Activated CD4-positive, alpha-beta T cell treated with anti-CD3 and anti-CD28 coated beads, Interleukin-2, amount 10 ng/mL, durations not matched to agents 24 days and 14 days (primary cell): ENCODE measurements at regions of chr3 and their contacts with region 1.

Region 1: DNA sequence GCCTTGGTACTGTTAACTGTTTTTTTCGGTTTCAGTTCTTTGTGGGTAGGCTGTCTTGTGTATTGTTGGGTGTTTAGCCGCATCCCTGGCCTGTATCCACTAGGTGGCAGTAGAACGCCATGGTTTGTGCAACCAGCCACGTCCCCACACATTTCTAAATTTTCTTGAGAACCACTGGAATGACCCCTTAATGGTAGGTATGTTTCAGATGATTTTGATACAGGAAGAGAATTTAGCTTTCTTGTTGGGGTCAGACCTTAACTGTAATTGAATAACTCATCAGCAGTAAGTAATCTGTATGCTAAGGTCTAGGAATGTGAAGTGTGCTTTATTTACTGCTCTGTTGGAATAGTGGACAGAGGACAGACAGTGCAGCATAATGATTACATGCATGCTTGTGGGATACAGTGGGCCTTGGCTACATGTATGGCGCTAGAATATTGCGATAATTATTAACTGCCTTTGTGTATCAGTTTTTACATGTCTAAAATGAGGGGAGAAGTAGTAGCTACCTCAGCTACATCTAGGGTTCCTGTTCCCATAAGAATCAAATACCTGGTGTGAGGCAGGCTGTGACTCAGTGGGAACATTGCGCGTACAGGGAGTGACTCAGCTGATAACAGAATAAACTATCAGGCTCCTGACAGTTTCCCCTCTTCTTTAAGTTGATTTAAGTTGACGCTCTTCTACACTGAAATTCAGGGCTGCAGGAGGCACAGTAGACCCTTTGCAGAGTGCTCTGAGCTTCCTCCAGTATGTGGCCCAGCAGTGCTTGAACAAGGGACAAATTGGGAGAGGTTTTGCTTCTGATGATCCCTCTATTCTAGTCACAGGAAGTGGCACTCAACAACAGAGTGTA is 25.0 kb upstream of the GPR171 start:
- DNase-seq: peak; percentile 94
- H3K4me3 Mint-ChIP-seq: peak overlapping the region; percentile 44
- H3K27ac Mint-ChIP-seq: peak overlapping the region; percentile 74
- H3K4me1 Mint-ChIP-seq: peaks cover 56% of the 10 kb centered on the region
- H3K27me3 Mint-ChIP-seq: no peaks in the 10 kb centered on the region

Region 2: DNA sequence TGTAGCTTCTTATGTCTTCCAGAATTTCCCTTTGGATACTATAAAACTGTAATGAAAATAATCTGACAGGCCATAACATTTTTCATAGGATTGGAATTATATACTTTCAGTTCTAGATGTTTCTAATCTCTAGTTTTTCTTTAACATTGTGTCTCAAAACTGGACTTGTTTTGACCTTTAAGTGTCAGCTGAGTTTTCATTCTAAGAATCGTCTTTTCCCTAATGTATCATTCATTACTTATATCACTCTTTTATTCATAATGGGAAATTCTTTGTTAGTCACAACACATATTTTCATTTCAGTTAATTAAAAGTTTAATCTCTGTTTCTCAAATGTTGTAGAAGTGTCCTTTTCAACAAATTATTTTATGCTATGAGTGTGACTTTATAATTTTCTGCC is 36.9 kb before region 1 on chr3:
- intact Hi-C with region 1: loop called (anchors 2 kb)
- DNase-seq: no peak
- H3K4me3 Mint-ChIP-seq: peak overlapping the region; percentile 63
- H3K27ac Mint-ChIP-seq: peak overlapping the region; percentile 89
- H3K4me1 Mint-ChIP-seq: peaks cover 42% of the 10 kb centered on the region
- H3K27me3 Mint-ChIP-seq: no peaks in the 10 kb centered on the region

Region 3: DNA sequence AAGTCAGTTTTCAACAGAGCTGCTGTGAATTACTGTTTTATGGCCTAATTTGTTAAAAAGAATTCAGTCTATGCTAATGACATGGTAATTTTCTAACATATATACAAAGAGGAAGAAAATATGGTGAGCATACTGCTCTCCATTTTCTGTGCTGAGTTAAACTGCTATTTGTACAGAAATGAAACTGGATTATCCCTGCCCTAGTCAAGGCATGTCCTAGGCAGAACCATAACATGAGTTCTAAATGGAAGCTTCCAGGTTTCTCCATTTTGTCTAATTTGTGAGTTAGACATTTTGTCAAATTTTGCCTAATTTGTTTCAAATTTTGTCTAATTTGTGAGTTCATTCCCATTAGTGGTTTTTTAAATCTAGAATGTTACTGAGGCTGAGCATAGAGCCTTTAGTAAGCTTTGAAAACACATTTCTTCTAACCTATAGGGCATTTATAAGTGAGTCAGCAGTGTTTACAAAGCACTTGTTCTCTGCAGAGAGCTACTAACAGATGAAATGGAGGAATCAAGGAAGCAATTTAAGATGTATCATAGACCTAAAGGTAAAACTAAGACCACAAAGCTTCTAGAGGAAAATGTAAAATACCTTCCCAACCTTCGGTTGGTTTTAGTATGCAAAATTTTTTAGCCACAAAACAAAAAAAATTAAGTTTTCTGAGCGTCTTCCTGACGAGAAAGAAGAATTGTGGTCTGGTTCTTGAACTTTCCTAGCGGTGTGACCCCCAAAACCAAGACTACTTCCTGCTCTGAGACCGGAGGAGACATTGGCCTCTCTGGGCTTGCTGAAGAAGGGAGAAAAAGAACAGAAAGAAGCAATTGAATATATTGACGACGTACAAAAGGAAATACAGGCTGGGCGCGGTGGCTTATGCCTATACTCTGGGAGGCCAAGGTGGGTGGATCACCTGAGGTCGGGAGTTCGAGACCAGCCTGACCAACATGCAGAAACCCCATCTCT is 40.5 kb after region 1 on chr3:
- intact Hi-C with region 1: loop called (anchors 2 kb)
- DNase-seq: peak; percentile 89
- H3K4me3 Mint-ChIP-seq: peak overlapping the region; percentile 72
- H3K27ac Mint-ChIP-seq: peak overlapping the region; percentile 91
- H3K4me1 Mint-ChIP-seq: peaks cover 38% of the 10 kb centered on the region
- H3K27me3 Mint-ChIP-seq: peaks cover 2% of the 10 kb centered on the region

Region 4: GRCh38 chr3:151282921-151283320 is 54.9 kb after region 1 on chr3:
- intact Hi-C with region 1: loop called (anchors 1 kb)
- DNase-seq: peak; percentile 70
- H3K4me3 Mint-ChIP-seq: no peak overlapping the region
- H3K27ac Mint-ChIP-seq: peak overlapping the region; percentile 81
- H3K4me1 Mint-ChIP-seq: peaks cover 50% of the 10 kb centered on the region
- H3K27me3 Mint-ChIP-seq: no peaks in the 10 kb centered on the region

Region 5: GRCh38 chr3:151327571-151328198 is 99.6 kb after region 1 on chr3:
- intact Hi-C with region 1: loop called (anchors 2 kb)
- DNase-seq: no peak
- H3K4me3 Mint-ChIP-seq: no peak overlapping the region
- H3K27ac Mint-ChIP-seq: no peak overlapping the region
- H3K4me1 Mint-ChIP-seq: peaks cover 9% of the 10 kb centered on the region
- H3K27me3 Mint-ChIP-seq: peaks cover 30% of the 10 kb centered on the region

Region 6: DNA sequence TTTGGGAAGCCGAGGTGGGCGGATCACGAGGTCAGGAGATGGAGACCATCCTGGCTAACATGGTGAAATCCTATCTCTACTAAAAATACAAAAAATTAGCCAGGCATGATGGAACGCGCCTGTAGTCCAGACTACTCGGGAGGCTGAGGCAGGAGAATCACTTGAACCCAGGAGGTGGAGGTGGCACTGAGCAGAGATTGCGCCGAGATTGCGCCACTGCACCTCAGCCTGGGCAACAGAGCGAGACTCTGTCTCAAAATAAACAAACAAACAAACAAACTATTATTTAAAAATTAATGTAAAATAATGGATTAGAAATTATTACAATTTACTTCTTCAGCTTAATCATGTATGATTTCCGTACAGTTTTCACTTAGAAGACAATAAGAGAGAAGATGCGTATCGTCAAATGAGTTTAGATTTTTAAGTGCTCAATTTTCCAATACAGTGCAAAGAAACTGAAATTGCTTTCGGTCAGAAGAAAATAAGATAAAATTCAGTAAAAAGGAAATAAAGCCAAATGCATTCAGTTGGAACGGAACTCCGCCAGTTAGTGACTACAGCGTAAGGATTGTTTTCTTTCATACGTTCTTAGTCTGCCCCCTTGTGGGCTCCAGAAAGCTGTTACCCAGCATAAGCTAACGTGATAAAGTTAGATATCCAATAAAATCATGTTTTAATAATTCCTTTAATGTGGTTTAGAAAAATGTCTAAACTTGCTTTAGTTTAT is 610.7 kb after region 1 on chr3:
- intact Hi-C with region 1: loop called (anchors 1 kb)
- DNase-seq: peak; percentile 81
- H3K4me3 Mint-ChIP-seq: no peak overlapping the region
- H3K27ac Mint-ChIP-seq: no peak overlapping the region
- H3K4me1 Mint-ChIP-seq: no peaks in the 10 kb centered on the region
- H3K27me3 Mint-ChIP-seq: peaks cover 26% of the 10 kb centered on the region